Tibial artery (tissue), 4 donors: ENCODE measurements at regions of chr1 and their contacts with region 1.

Region 1: DNA sequence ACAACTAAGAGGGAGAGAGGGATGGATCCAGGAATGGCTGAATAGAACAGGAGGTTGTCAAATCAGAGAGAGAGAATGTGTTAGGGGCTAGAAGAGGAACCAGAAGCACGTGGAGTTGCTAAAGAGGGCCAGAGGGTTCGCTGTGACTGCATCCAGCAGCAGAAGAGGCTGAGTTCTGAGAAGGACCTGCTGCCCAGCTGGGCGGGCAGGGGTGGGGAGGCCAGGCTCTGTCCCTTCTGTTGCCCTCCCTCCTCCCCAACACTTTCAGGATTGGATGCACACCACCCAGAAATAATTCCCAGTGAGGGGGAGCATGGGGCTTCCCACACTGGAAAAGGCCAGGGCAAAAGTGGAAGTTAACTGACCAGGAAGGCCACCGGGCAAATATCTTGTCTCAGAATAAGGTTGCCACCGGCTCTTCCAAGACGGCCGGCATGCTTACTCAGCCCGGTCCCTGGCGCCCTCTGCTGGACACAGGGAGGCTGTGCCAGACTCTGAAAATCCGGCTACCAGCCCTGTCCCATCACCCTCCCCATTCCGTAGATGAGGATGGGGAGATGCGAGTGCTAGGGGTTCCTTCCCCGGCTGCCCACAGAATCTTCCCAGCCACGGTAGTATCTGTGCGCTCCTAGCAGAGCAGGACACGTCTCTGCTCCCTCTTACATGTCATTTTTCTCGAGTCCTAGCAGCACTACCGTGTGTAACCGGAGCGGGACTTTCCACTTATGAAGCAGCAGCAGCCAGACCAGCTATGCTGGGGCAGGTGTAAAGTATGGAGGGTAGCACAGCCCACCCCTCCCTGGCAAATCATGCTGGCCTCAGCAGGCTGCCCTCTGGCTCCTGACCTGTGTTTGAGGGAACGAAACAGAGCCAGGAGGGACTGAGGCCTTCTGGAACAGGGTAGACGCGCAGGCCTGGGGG is 46.8 kb upstream of the A3GALT2 start:
- DNase-seq: peak; percentile 87 to 91
- H3K4me3 ChIP-seq: no peak overlapping the region
- H3K27ac ChIP-seq: peak overlapping the region; percentile 84 to 87
- H3K4me1 ChIP-seq: peaks cover 0 to 58% (median 52%) of the 10 kb centered on the region in 4 donors
- H3K27me3 ChIP-seq: no peaks in the 10 kb centered on the region
- CTCF ChIP-seq: peak; percentile 95 to 99

Region 2: DNA sequence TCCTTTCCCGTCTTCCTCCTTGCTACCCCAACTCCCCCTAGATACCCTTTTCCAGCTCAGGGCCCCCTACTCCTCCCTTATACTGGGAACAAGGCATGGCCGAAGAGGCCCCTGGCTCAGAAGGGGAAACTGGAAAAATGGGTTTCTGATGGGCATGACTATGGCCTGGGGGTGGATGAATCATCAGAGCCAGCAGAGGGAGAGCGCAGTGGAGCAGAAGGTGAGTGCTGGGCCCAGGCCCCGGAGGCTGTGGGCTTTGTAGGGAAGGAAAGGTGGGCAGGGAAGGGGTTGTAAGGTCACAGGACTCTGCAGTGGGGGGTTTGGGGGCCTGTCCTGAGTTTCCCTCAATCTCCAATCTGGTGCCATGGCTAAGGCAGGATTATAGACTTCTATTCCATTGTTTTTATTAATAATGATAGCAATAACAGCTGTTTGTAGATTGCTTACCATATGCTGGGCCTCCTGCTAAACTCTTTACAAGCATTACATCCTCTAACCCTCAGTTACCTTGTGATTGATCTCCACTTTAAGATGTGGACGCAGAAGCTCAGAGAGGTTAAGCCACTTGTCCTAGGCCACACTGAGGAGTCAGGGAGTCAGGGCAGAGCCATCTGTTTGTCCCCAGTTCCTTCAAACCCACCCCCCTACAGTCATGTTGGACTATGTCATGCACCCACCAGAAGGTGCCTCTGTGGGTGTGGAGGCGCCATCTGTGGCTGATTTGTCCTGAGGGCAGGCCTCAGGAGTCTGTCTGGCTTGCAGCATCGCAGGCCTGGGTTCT is 147.7 kb before region 1 on chr1:
- intact Hi-C with region 1: loop called (anchors 5 kb)
- DNase-seq: no peak
- H3K4me3 ChIP-seq: no peak overlapping the region
- H3K27ac ChIP-seq: no peak overlapping the region
- H3K4me1 ChIP-seq: peaks cover 0 to 9% (median 0%) of the 10 kb centered on the region in 4 donors
- H3K27me3 ChIP-seq: no peaks in the 10 kb centered on the region
- CTCF ChIP-seq: no peak

Region 3: DNA sequence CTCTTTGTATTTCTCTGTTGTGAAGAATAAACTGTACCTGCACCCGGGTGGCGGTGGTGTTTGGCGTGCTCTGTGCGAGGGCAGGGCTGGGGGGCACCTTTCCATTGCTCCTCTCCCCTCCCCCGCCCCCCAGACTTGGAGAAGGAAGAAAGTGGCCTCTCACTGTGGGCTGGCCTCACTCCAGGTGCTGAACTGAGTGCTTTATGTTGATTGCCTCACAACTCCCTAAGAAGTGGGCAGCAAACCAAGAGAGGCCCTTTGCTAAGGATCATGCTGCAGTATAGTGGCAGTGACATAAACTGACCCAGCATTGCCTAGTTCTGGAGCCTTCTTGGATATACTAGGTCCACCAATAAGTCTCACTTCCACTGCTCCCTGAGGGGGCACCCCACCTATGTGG is 67.1 kb before region 1 on chr1:
- intact Hi-C with region 1: loop called (anchors 1 kb)
- DNase-seq: peak; percentile 79 to 82
- H3K4me3 ChIP-seq: no peak overlapping the region
- H3K27ac ChIP-seq: peak overlapping the region in 1 of 2 donors; percentile 43
- H3K4me1 ChIP-seq: peaks cover 0 to 25% (median 13%) of the 10 kb centered on the region in 4 donors
- H3K27me3 ChIP-seq: no peaks in the 10 kb centered on the region
- CTCF ChIP-seq: no peak